ENCODE measurements at regions of chr3 and their contacts with region 1.

Region 1: GRCh38 chr3:171772427-171773056 is 37.7 kb downstream of the PLD1 start:
- DNase-seq: no peak
- H3K4me3 ChIP-seq: no peak overlapping the region
- H3K27ac ChIP-seq: no peak overlapping the region
- H3K4me1 ChIP-seq: peaks cover 12 to 61% (median 39%) of the 10 kb centered on the region in 4 donors
- H3K27me3 ChIP-seq: no peaks in the 10 kb centered on the region
- CTCF ChIP-seq: peak; percentile 58 to 71 (median 69)
- EP300 ChIP-seq: no peak
- POLR2A ChIP-seq: no peak

Region 2: DNA sequence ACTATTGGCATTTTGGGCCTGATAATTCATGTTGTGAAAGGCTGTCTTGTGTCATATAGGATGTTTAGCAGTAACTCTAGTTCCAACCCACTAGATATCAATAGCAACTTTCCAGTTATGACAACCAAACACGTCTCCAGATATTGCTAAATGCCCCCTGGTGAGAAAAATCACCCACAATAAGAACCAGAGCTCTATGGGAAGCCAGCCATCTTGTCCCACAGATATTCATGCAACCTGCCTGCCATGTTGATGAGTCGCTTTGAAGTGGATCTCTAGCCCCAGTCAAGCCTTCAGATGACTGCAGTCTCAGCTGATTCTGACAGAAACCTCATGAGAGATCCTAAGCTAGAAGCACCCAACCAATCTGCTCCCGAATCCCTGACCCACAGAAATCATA is 306.8 kb before region 1 on chr3:
- intact Hi-C with region 1: no loop called
- DNase-seq: no peak
- H3K4me3 ChIP-seq: no peak overlapping the region
- H3K27ac ChIP-seq: no peak overlapping the region
- H3K4me1 ChIP-seq: peaks cover 0 to 14% (median 11%) of the 10 kb centered on the region in 4 donors
- H3K27me3 ChIP-seq: no peaks in the 10 kb centered on the region
- CTCF ChIP-seq: no peak
- EP300 ChIP-seq: no peak
- POLR2A ChIP-seq: no peak

Region 3: DNA sequence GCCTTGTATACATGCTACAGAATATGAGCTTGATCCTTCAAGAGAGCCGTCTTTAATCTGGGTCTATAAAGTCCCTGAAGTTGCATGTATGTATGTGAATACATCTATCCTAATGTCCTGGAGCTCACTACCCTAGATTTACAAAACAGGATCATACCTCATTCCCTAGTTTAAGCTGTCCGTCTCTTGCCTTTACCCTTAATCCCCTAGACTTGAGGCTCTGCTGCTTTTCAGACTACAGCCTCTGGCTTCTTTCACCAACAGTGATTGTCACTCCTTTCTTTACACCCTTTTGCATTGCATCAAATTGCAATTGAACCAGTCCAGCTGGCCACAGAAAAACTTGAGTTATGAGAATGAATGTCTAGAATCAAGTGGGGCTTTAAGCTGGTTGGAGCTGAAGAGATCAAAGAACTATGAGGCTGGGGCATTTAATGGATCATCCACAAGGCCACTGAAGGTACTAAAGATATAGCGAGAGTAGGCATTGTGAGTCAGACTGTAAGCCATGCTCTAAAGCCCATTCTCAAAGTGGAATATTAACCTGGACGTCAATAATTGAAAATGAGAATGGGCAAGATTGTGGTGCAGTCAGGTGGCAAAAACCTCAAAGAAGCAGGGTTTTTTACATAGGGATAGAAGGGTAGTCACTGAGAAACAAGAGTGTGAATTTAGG is 50.0 kb after region 1 on chr3:
- intact Hi-C with region 1: loop called (anchors 5 kb)
- DNase-seq: no peak
- H3K4me3 ChIP-seq: no peak overlapping the region
- H3K27ac ChIP-seq: no peak overlapping the region
- H3K4me1 ChIP-seq: no peaks in the 10 kb centered on the region
- H3K27me3 ChIP-seq: no peaks in the 10 kb centered on the region
- CTCF ChIP-seq: no peak
- EP300 ChIP-seq: no peak
- POLR2A ChIP-seq: no peak

Region 4: GRCh38 chr3:171829841-171830517 is 57.4 kb after region 1 on chr3:
- intact Hi-C with region 1: loop called (anchors 5 kb)
- DNase-seq: no peak
- H3K4me3 ChIP-seq: no peak overlapping the region
- H3K27ac ChIP-seq: peak overlapping the region; percentile 46 to 64 (median 52)
- H3K4me1 ChIP-seq: peaks cover 27 to 41% (median 33%) of the 10 kb centered on the region in 4 donors
- H3K27me3 ChIP-seq: no peaks in the 10 kb centered on the region
- CTCF ChIP-seq: peak; percentile 69 to 84 (median 71)
- EP300 ChIP-seq: no peak
- POLR2A ChIP-seq: no peak

Region 5: DNA sequence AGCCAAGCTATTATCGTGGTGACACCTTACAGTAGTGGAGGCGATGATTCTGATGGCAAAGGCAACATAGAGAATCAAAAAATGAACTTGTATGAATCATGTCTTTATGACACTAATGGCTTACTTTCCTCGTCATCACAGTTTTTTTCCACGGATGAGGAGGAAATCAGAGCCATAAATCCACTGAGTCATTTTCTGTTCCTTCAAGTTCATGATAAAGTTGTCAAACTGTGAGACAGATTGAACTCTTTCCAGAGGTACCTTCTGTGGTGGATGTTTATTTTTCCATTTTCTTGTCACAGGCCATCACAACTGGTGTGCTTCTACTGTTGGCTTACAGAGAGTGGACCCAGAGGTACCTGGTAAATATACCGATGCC is 79.1 kb after region 1 on chr3:
- intact Hi-C with region 1: no loop called
- DNase-seq: no peak
- H3K4me3 ChIP-seq: no peak overlapping the region
- H3K27ac ChIP-seq: no peak overlapping the region
- H3K4me1 ChIP-seq: peaks cover 0 to 9% (median 2%) of the 10 kb centered on the region in 4 donors
- H3K27me3 ChIP-seq: no peaks in the 10 kb centered on the region
- CTCF ChIP-seq: no peak
- EP300 ChIP-seq: no peak
- POLR2A ChIP-seq: no peak